ENCODE measurements at regions of chr19 and their contacts with region 1.

Region 1: DNA sequence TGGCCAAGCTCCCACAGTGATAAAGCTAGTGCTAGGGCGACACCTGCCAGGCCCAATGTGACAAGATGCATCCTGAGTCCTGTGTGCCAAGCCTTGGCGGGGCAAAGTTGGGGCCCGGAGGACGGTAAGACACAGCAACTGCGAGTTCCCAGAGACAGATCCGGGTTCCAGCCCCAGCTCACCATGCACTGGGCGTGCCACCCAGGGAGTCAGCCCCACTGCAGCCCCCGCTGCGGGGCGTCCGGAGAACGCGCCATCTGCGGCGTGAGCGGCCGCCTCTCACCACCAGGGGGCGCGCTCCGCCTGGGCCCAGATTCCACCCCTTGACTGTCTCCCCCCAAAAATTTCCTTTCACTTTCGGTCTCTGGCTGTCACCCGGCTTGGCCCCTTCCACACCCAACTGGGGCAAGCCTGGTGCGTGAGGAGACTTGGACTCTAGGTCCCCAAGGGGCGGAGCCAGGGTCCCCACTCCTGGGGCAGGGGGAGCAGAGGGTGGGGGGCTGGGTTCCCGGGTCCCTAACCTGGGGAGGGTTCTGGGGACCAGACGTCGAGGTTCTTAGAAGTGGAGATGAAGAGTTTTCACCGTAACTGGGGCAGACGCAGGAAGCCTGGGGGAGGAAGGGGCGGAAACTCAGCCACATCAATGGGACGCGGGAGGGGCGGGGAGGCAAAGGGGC is at the start of gene FLT3LG:
- DNase-seq: peak; percentile 97
- ATAC-seq: peak; percentile 74
- H3K4me3 Mint-ChIP-seq: peak within 1 kb of the TSS; percentile 98
- H3K27ac Mint-ChIP-seq: peak within 1 kb of the TSS; percentile 99
- H3K4me1 Mint-ChIP-seq: peaks cover 47% of the 10 kb centered on the region
- H3K27me3 Mint-ChIP-seq: no peaks in the 10 kb centered on the region
- total RNA-seq, gene FLT3LG: 250 to 282 TPM

Region 2: DNA sequence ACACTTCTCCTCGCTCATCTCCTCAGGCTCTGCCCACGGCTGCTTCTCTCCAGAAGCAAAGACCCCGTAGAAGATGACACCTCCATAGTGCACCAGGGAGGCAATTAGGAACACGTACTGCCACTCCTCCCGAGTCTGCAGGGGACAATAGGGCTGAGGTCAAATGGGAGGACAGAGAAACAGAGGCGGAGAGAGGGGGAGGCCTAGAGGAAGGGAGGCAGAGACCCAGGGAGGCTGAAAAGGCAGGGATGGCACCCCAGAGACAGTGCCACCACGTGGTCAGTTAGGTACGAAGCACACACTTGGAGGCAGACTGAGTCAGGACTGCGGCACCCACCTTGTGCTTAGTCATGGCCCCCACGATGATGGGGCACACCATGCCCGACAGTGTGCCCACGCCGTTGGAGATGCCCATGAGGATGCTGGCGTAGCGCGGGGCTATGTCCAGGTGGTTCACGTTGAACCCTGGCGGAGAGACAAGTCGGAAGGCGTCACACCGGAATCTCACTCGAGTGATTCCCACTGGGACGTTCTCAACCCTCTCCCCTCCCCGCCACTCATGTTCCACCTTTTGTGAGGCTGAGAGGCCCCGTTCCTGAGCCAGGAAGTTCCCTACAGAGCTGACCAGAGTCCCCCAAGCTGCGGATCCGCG is 43.2 kb before region 1 on chr19:
- POLR2A ChIA-PET with region 1: no interaction called
- DNase-seq: no peak
- ATAC-seq: no peak
- H3K4me3 Mint-ChIP-seq: no peak overlapping the region
- H3K27ac Mint-ChIP-seq: no peak overlapping the region
- H3K4me1 Mint-ChIP-seq: peaks cover 37% of the 10 kb centered on the region
- H3K27me3 Mint-ChIP-seq: peaks cover 90% of the 10 kb centered on the region

Region 3: DNA sequence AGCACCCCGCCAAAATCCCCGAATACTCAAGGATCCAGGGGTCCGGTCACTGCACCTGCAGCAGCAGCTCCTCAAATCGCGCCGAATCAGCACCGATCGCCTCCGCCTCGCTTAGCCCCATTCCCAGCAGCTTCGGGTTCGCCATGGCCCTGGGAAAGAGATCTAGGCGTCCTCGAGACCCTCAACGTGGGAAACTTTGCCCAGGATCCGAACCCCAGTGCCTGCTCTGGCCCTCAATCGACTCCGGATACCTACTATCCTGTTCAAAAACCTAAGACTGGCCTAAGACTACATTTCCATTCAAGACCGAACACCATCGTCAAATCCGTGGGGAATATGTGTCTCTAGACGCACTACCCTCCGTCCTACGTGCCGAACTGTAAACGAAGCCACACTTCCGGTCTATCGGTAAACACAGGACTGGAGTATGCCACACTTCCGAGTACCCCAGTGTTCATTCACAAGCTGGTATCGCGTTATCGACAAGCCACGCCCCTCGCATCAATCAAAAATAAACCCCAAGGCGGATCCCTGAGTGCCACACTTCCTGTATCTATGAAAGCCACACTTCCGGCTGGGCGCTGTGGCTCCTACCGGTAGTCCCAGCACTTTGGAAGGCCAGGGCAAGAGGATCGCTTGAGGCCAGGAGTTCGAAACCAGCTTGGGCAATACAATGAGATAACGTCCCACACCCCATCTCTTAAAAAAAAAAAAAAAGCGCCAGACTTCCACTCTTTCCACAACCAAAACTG is 22.4 kb before region 1 on chr19 and contains the start of gene PIH1D1:
- POLR2A ChIA-PET with region 1: interaction called, 128 read pairs
- DNase-seq: peak; percentile 87
- ATAC-seq: peak; percentile 59
- H3K4me3 Mint-ChIP-seq: peak within 1 kb of the TSS; percentile 100
- H3K27ac Mint-ChIP-seq: peak within 1 kb of the TSS; percentile 100
- H3K4me1 Mint-ChIP-seq: peaks cover 32% of the 10 kb centered on the region
- H3K27me3 Mint-ChIP-seq: no peaks in the 10 kb centered on the region
- total RNA-seq, gene PIH1D1: 143 to 148 TPM

Region 4: GRCh38 chr19:49487277-49488045 is 13.5 kb after region 1 on chr19 and contains the start of gene RPL13A:
- POLR2A ChIA-PET with region 1: interaction called, 60 read pairs
- DNase-seq: peak; percentile 100
- ATAC-seq: peak; percentile 90
- H3K4me3 Mint-ChIP-seq: peak within 1 kb of the TSS; percentile 92
- H3K27ac Mint-ChIP-seq: peak within 1 kb of the TSS; percentile 92
- H3K4me1 Mint-ChIP-seq: peaks cover 30% of the 10 kb centered on the region
- H3K27me3 Mint-ChIP-seq: no peaks in the 10 kb centered on the region
- total RNA-seq, gene RPL13A: 2,936 to 3,173 TPM

Region 5: DNA sequence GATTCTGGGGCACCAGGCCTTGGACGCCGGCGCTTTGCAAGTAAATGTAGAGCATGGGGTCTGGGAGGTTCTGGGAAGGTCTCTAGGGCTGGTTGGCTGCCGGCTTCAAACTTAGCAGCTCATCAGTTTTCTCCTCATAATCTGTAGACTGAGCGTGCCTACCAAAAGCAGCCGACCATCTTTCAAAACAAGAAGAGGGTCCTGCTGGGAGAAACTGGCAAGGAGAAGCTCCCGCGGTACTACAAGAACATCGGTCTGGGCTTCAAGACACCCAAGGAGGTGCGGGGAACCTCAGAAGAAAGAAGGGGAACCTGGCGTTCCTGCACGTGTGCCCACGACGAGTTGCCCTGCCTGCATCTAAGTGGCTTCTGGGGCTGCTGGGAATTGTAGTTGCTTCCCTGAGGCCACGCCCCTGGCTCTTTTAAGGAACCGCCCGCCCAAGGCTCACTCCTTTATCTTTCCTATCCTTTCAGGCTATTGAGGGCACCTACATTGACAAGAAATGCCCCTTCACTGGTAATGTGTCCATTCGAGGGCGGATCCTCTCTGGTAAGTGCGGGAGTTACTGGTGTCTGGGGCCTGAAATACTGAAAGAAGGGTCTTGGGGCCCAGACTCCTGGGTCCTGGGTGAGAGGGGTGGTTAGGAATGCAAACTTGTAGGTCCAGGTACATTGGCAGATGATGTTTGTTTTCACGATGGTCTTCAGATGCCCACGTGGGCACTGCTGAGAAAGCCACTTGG is 23.2 kb after region 1 on chr19:
- POLR2A ChIA-PET with region 1: interaction called, 32 read pairs
- DNase-seq: peak; percentile 68
- ATAC-seq: no peak
- H3K4me3 Mint-ChIP-seq: peak overlapping the region; percentile 95
- H3K27ac Mint-ChIP-seq: peak overlapping the region; percentile 92
- H3K4me1 Mint-ChIP-seq: peaks cover 42% of the 10 kb centered on the region
- H3K27me3 Mint-ChIP-seq: no peaks in the 10 kb centered on the region

Region 6: DNA sequence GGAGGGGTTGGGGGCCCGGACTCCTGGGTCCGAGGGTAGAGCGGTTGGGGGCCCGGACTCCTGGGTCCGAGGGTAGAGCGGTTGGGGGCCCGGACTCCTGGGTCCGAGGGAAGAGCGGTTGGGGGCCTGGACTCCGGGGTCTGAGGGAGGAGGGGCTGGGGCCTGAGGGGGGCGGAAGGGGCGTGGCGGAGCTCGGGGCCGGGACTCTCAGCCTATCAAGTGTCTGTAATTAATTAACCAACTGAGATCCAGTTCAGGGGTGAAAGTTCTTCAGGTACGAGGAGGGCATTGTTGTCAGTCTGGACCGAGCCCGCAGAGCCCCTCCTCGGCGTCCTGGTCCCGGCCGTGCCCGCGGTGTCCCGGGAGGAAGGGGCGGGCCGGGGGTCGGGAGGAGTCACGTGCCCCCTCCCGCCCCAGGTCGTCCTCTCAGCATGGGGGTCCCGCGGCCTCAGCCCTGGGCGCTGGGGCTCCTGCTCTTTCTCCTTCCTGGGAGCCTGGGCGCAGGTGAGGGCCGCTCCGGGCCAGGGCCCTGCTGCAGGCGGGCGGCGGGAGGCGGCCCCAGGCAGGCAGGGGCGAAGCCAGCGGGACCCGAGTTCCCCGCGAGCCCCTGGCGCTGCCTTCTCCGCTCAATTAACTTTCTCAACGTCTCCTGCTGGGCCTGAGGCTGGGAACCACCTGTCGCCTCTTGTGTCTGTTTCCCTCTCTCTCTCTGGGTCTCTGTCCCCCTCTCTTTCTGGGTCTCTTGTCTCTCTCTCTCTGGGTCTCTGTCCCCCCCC is 39.2 kb after region 1 on chr19:
- POLR2A ChIA-PET with region 1: no interaction called
- DNase-seq: no peak
- ATAC-seq: peak; percentile 53
- H3K4me3 Mint-ChIP-seq: peak overlapping the region; percentile 84
- H3K27ac Mint-ChIP-seq: peak overlapping the region; percentile 87
- H3K4me1 Mint-ChIP-seq: peaks cover 20% of the 10 kb centered on the region
- H3K27me3 Mint-ChIP-seq: peaks cover 11% of the 10 kb centered on the region